ENCODE measurements at regions of chr14 and their contacts with region 1.

Region 1: DNA sequence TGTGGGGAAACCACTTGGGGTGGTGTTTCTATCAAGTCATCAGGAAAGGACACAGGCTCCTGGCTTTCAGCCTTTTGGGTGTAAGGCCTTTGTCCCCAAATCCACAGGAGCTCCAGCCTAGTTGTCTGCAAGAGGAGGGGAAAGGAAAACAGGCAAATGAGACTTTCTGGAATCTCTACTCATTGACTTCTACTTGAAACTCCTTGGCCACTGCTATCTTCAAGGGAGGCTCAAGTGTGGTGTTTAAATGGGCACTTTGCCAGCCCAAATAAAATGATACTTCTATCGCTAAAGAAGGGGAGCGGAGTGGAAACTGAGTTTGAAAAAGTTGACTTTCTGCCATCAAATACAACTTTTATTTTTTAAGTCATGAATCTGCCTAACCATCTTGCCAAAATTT is 445.9 kb upstream of the RGS6 start:
- DNase-seq: no peak
- H3K4me3 Mint-ChIP-seq: no peak overlapping the region
- H3K27ac Mint-ChIP-seq: no peak overlapping the region
- H3K4me1 Mint-ChIP-seq: peaks cover 10% of the 10 kb centered on the region
- H3K27me3 Mint-ChIP-seq: no peaks in the 10 kb centered on the region

Region 2: DNA sequence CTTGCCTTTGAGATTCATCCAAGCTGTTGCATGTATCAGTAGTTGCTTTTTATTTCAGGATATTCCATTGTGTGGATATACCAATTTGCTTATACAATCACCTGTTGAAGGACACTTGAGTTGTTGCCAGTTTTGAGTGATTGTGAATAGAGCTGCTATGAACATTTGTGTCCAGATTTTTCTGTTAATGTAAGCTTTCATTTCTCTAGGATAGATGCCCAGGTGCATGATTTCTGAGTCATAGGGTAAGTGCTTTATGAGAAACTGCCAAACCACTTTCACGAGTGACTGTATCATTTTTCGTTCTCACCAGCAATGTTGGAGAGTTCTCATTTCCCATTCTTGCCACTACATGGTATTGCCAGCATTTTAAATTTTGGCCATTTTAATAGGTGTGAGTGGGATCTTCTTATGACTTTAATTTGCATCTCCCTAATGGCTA is 11.4 kb after region 1 on chr14:
- CTCF ChIA-PET with region 1: interaction called, 10 read pairs
- POLR2A ChIA-PET with region 1: no interaction called
- DNase-seq: no peak
- H3K4me3 Mint-ChIP-seq: no peak overlapping the region
- H3K27ac Mint-ChIP-seq: no peak overlapping the region
- H3K4me1 Mint-ChIP-seq: peaks cover 17% of the 10 kb centered on the region
- H3K27me3 Mint-ChIP-seq: no peaks in the 10 kb centered on the region

Measured in activated CD4-positive, alpha-beta T cell treated with anti-CD3 and anti-CD28 coated beads, Interleukin-2, amount 10 ng/mL, durations not matched to agents 7 days and 5 days (primary cell).